ENCODE measurements at regions of chr4 and their contacts with region 1.

Region 1: DNA sequence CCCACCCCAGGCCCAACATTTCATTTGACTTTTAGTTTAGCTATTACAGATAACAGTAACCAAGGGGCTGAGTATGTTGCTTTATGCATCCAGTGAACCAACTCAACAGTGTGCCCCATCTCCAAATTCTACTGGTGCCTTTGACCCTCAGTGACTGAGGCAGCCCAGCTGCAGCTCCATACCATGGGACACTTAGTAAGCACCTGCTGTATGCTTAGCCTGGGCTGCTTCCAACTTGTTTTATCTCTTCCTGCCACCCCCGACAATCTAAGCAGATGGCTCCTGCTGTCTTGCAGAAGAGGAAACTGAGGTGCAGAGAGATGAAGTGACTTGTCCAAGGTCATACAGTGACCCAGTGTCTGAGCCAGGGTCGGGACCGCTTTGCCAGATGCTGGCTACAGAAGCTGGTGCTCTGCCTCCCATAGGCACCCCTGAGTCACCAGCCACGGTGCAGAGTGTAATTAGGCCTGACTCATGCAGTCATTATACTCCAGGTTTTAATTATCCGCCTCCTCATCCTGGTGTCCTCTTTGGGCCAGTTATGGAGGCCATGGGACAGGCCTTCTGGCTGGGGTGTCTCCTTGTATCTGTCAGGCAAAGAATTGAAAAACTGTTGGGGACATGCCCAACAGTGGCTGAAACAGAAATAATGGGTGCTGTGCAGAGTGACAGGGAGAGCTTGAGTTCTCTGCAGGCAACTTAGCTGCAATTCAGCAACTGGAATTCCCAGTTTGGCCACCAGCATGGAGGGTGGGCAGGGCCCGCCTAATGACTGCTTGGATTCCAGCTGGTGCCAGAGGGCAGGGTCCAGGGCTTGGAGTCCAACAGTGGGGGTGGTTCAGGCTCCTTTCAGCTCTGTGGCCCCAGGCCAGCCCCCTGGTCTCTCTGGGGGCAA is 8.2 kb upstream of the GPR78 start:
- DNase-seq: no peak
- ATAC-seq: no peak

Region 2: GRCh38 chr4:8497755-8498154 is 74.2 kb before region 1 on chr4:
- intact Hi-C with region 1: loop called (anchors 2 kb)
- DNase-seq: no peak
- ATAC-seq: no peak

Region 3: GRCh38 chr4:8594097-8595038 is 22.4 kb after region 1 on chr4:
- intact Hi-C with region 1: no loop called
- DNase-seq: no peak
- ATAC-seq: peak; percentile 69

Region 4: DNA sequence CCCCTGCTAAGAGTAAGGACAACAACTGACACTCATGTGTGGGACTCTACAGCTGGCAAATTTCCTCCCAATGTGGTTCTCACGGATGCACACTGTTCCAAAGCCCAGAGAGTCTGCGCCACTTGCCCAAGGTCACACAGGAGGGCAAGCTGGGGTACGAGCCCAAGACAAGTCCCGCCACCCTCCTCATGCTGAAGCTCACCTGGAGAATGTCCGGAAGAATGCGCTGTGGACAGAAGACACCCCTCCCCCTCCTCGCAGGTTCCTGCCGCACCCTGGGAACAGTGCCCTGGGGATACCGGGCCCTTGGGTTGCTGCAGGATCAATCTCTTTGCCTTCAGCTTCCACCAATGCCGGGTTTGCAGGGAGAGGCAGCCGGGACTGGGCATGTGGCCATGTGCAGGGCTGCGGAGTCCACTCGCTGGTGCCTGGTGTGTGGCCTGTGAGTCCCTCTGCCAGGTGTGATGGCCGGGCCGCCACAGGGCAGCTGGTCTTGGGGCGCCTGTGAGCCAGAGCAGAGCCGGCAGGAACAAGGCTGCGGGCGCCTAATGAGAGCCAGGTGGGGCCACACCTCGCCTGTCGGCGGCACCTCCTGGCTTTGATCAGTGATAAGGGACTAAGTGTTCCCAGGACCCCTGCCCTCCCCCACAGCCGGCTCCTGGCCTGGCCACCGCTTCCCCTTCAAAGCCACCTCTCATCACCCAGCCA is 153.0 kb after region 1 on chr4:
- intact Hi-C with region 1: no loop called
- DNase-seq: peak; percentile 37
- ATAC-seq: no peak

Measured in sciatic nerve (tissue), 2 donors.